B cell (primary cell): ENCODE measurements at regions of chr22 and their contacts with region 1.

Region 1: GRCh38 chr22:40487663-40488249 is 117.4 kb downstream of the SGSM3 start:
- DNase-seq: peak; percentile 64
- ATAC-seq: no peak
- H3K4me3 ChIP-seq: no peak overlapping the region
- H3K4me3 Mint-ChIP-seq: no peak overlapping the region
- H3K27ac ChIP-seq: peak overlapping the region in 1 of 2 donors; percentile 25
- H3K27ac Mint-ChIP-seq: peak overlapping the region; percentile 5
- H3K4me1 ChIP-seq: peaks cover 25 to 30% of the 10 kb centered on the region in 2 donors
- H3K4me1 Mint-ChIP-seq: peaks cover 26% of the 10 kb centered on the region
- H3K27me3 ChIP-seq: no peaks in the 10 kb centered on the region
- H3K27me3 Mint-ChIP-seq: no peaks in the 10 kb centered on the region
- CTCF ChIP-seq: peak; percentile 83

Region 2: GRCh38 chr22:40203572-40203971 is 284.2 kb before region 1 on chr22:
- CTCF ChIA-PET with region 1: no interaction called
- POLR2A ChIA-PET with region 1: no interaction called
- intact Hi-C with region 1: no loop called
- DNase-seq: peak; percentile 61
- ATAC-seq: peak; percentile 84
- H3K4me3 ChIP-seq: no peak overlapping the region
- H3K4me3 Mint-ChIP-seq: peak overlapping the region; percentile 58
- H3K27ac ChIP-seq: peak overlapping the region in 1 of 2 donors; percentile 80
- H3K27ac Mint-ChIP-seq: peak overlapping the region; percentile 81
- H3K4me1 ChIP-seq: peaks cover 35 to 40% of the 10 kb centered on the region in 2 donors
- H3K4me1 Mint-ChIP-seq: peaks cover 62% of the 10 kb centered on the region
- H3K27me3 ChIP-seq: no peaks in the 10 kb centered on the region
- H3K27me3 Mint-ChIP-seq: no peaks in the 10 kb centered on the region
- CTCF ChIP-seq: no peak

Region 3: DNA sequence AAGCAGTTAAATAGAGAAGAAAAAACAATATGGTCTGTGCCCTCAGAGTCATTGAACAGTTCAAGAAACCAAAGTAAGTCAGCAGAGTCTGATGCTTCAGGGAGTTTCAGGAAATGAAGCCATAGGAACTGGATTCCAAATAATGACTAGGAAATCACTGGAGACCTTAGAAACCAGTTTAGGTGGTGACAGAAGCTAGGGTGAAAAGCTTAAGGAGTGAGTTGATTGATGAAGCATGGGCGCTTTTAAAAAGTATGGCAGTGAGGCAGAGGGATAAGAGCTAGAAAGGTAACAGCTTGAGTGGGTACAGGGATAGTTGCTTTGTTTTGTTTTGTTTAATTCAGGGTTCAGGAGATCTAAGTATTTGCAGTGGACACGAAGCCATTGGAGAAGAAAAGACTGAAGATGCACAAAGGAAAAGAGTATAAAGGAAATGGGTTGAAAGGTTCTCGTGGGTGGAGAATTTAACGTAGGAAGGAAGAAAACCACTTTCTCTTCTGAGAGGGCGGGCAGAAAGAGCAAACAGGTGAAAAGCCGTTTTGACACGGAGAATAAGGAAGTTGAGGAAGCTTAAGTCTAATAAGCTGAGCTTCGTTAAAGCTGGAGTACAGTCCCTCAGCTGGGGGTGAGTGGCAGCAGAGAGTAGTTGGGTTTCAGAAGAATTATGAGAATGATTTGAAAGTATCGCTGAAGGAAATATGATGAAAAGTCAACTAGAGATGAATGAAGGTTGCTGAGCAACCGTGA is 102.5 kb before region 1 on chr22:
- CTCF ChIA-PET with region 1: interaction called, 7 read pairs
- POLR2A ChIA-PET with region 1: no interaction called
- intact Hi-C with region 1: loop called (anchors 5 kb)
- DNase-seq: peak; percentile 82
- ATAC-seq: peak; percentile 98
- H3K4me3 ChIP-seq: peak overlapping the region; percentile 18 to 63 (median 50)
- H3K4me3 Mint-ChIP-seq: peak overlapping the region; percentile 85
- H3K27ac ChIP-seq: peak overlapping the region; percentile 82 to 87
- H3K27ac Mint-ChIP-seq: peak overlapping the region; percentile 92
- H3K4me1 ChIP-seq: peaks cover 59 to 75% of the 10 kb centered on the region in 2 donors
- H3K4me1 Mint-ChIP-seq: peaks cover 63% of the 10 kb centered on the region
- H3K27me3 ChIP-seq: no peaks in the 10 kb centered on the region
- H3K27me3 Mint-ChIP-seq: no peaks in the 10 kb centered on the region
- CTCF ChIP-seq: peak; percentile 30

Region 4: DNA sequence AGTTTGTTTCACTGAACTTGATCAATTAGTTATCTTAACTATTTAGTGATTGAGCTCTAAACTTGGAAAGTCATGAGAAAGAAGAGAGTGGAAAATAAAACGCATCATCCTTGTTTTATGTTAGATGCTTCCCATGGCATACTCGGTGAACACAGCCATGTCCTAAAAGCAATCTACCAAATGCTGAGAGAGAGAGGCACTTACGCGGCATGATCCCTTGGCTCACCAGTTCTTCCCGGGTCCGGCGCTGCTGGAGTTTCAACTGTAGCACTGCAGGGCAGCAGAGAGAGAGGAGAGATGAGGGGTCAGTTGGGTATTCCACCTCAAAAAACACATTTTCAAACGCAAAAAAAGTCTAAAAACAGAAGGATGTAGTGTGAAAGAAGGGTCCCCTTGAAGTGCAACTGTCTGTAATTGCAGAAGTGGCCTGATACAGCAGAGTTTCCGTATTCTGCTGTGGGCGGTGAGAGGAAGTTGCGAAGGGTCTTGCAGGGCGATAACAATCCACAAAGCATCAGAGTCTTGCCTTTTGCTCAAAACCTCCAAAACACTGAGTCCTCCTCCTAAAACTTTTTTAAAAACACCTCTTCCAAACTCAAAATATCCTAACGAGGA is 24.6 kb before region 1 on chr22:
- CTCF ChIA-PET with region 1: interaction called, 15 read pairs
- POLR2A ChIA-PET with region 1: no interaction called
- intact Hi-C with region 1: loop called (anchors 2 kb)
- DNase-seq: peak; percentile 77
- ATAC-seq: peak; percentile 88
- H3K4me3 ChIP-seq: peak overlapping the region; percentile 73 to 99 (median 80)
- H3K4me3 Mint-ChIP-seq: peak overlapping the region; percentile 97
- H3K27ac ChIP-seq: peak overlapping the region; percentile 81 to 89
- H3K27ac Mint-ChIP-seq: peak overlapping the region; percentile 98
- H3K4me1 ChIP-seq: peaks cover 36 to 43% of the 10 kb centered on the region in 2 donors
- H3K4me1 Mint-ChIP-seq: peaks cover 55% of the 10 kb centered on the region
- H3K27me3 ChIP-seq: no peaks in the 10 kb centered on the region
- H3K27me3 Mint-ChIP-seq: no peaks in the 10 kb centered on the region
- CTCF ChIP-seq: no peak

Region 5: GRCh38 chr22:40512426-40513136 is 24.8 kb after region 1 on chr22:
- CTCF ChIA-PET with region 1: interaction called, 11 read pairs
- POLR2A ChIA-PET with region 1: interaction called, 5 read pairs
- intact Hi-C with region 1: no loop called
- DNase-seq: no peak
- ATAC-seq: no peak
- H3K4me3 ChIP-seq: no peak overlapping the region
- H3K4me3 Mint-ChIP-seq: no peak overlapping the region
- H3K27ac ChIP-seq: no peak overlapping the region
- H3K27ac Mint-ChIP-seq: no peak overlapping the region
- H3K4me1 ChIP-seq: no peaks in the 10 kb centered on the region
- H3K4me1 Mint-ChIP-seq: peaks cover 11% of the 10 kb centered on the region
- H3K27me3 ChIP-seq: no peaks in the 10 kb centered on the region
- H3K27me3 Mint-ChIP-seq: no peaks in the 10 kb centered on the region
- CTCF ChIP-seq: no peak

Region 6: DNA sequence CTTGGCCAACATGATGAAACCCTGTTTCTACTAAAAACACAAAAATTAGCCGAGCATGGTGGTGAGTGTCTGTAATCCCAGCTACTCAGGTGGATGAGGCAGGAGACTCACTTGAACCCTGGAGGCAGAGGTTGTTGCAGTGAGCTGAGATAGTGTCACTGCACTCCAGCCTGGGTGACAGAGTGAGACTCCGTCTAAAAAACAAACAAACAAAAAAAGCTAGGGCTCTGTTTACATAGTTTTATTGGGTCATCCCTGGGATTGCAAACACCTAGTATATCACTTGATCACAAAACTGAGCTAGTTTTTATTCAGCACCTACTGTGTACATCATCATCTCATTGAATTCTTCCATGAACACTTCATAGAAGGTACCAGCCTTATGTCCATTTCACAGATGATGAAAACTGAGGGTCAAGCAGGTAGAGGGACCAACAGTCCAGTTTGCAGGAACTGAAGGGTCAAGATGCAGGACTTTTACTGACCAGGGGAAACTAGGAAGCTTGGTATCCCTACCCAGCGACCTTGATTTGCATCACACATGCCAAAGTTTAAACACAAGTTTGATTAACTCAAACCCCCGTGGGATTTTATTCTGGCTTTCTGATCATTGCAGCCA is 157.9 kb after region 1 on chr22:
- CTCF ChIA-PET with region 1: interaction called, 25 read pairs
- POLR2A ChIA-PET with region 1: no interaction called
- intact Hi-C with region 1: no loop called
- DNase-seq: no peak
- ATAC-seq: no peak
- H3K4me3 ChIP-seq: peak overlapping the region in 1 of 5 experiments; percentile 7
- H3K4me3 Mint-ChIP-seq: peak overlapping the region; percentile 59
- H3K27ac ChIP-seq: no peak overlapping the region
- H3K27ac Mint-ChIP-seq: no peak overlapping the region
- H3K4me1 ChIP-seq: peaks cover 4 to 17% of the 10 kb centered on the region in 2 donors
- H3K4me1 Mint-ChIP-seq: peaks cover 11% of the 10 kb centered on the region
- H3K27me3 ChIP-seq: no peaks in the 10 kb centered on the region
- H3K27me3 Mint-ChIP-seq: no peaks in the 10 kb centered on the region
- CTCF ChIP-seq: no peak